ENCODE measurements at regions of chr11 and their contacts with region 1.

Region 1: DNA sequence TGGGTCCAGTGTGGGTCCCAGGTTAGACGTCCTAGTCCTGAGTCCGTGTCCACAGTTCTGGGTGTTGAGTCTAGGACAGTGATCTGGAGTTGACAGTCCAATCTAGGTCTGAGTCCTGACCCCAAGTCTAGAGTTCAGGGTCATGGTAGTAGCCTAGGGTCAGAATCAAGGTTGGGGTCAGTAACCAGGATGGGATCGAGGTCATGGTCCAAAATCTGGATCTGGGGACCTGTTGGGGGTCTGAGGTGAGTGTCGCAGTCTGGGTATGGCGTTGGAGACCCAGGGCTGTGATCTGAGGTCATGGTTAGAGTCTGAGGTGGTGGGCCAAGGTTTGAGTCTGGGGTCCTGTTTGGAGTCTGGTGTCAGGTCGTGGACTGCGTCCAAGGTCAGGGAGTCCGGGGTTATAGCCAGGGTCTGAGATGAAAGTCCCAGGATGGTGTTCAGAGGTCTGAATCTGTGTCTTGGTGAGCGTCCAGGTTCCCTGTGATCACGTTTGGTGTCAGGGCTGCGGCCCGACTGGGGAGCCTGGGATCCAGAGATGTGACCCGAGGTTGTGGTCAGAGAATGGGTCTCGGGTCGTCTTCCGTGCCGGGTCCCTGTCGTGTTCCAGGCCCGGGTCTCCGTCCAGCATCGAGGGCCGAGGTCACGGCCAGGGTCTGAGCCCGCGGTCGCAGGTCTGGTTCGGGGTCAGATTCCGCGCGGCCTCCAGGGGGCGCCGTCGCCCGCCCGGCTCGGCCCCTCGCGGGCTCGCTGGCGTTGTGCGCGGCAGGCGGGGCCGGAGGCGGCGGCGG is 445 bp upstream of the GRK2 start:
- DNase-seq: peak; percentile 77
- ATAC-seq: peak; percentile 39
- H3K4me3 ChIP-seq: peak overlapping the region; percentile 57
- H3K27ac ChIP-seq: no peak overlapping the region
- H3K4me1 ChIP-seq: peaks cover 49% of the 10 kb centered on the region
- H3K27me3 ChIP-seq: no peaks in the 10 kb centered on the region
- CTCF ChIP-seq: peak; percentile 68

Region 2: DNA sequence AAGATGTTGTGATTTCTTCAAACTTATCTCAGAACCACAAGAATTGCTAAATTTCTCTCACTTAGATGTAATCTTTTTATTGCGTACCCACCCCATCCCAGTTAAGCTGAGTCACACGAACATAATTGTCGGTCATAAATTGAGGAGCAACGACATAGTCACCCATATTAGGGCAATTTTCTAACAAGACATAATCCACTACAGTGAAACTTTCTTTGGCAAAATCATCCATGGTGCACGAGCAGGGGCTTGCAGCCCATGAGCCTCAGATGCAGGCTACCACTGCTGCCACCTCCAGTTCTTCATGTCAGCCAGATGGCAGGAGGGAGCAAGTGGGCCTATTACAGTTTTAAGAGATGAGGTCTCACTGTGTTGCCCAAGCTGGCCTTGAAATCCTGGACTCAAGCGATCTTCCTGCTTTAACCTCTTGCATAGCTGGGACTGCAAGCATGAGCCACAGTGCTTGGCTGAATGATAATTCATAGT is 69.8 kb before region 1 on chr11:
- CTCF ChIA-PET with region 1: no interaction called
- POLR2A ChIA-PET with region 1: no interaction called
- intact Hi-C with region 1: no loop called
- DNase-seq: peak; percentile 84
- ATAC-seq: peak; percentile 91
- H3K4me3 ChIP-seq: 0 out of 2 replicates have a peak overlapping the region, but pooled peaks have one; percentile 6
- H3K27ac ChIP-seq: peak overlapping the region; percentile 49
- H3K4me1 ChIP-seq: peaks cover 23% of the 10 kb centered on the region
- H3K27me3 ChIP-seq: no peaks in the 10 kb centered on the region
- CTCF ChIP-seq: peak; percentile 33; the same call in 1 of the 2 replicates

Region 3: GRCh38 chr11:67289611-67290479 is 24.0 kb after region 1 on chr11:
- CTCF ChIA-PET with region 1: no interaction called
- POLR2A ChIA-PET with region 1: no interaction called
- intact Hi-C with region 1: no loop called
- DNase-seq: peak; percentile 28
- ATAC-seq: peak; percentile 19
- H3K4me3 ChIP-seq: peak overlapping the region; percentile 85
- H3K27ac ChIP-seq: peak overlapping the region; percentile 21
- H3K4me1 ChIP-seq: peaks cover 44% of the 10 kb centered on the region
- H3K27me3 ChIP-seq: no peaks in the 10 kb centered on the region
- CTCF ChIP-seq: no peak

Region 4: GRCh38 chr11:67303132-67303834 is 37.5 kb after region 1 on chr11 and contains the start of gene SSH3:
- CTCF ChIA-PET with region 1: no interaction called
- POLR2A ChIA-PET with region 1: no interaction called
- intact Hi-C with region 1: loop called (anchors 5 kb)
- DNase-seq: peak; percentile 88
- ATAC-seq: peak; percentile 82
- H3K4me3 ChIP-seq: peak within 1 kb of the TSS; percentile 93
- H3K27ac ChIP-seq: peak within 1 kb of the TSS; percentile 55
- H3K4me1 ChIP-seq: peaks cover 18% of the 10 kb centered on the region
- H3K27me3 ChIP-seq: no peaks in the 10 kb centered on the region
- CTCF ChIP-seq: no peak
- total RNA-seq, gene SSH3: 35.1 and 52.4 TPM in 2 replicates

Region 5: GRCh38 chr11:67345920-67346799 is 80.3 kb after region 1 on chr11:
- CTCF ChIA-PET with region 1: interaction called, 5 read pairs
- POLR2A ChIA-PET with region 1: no interaction called
- intact Hi-C with region 1: loop called (anchors 2 kb)
- DNase-seq: peak; percentile 99
- ATAC-seq: peak; percentile 92
- H3K4me3 ChIP-seq: peak overlapping the region; percentile 26; the same call in 1 of the 2 replicates
- H3K27ac ChIP-seq: peak overlapping the region; percentile 95
- H3K4me1 ChIP-seq: peaks cover 38% of the 10 kb centered on the region
- H3K27me3 ChIP-seq: no peaks in the 10 kb centered on the region
- CTCF ChIP-seq: peak; percentile 99

Measured in PC-3 (cell line).